ENCODE measurements at regions of chr1 and their contacts with region 1.

Region 1: GRCh38 chr1:167220537-167221125 is at the start of gene POU2F1:
- DNase-seq: peak; percentile 99
- H3K4me3 ChIP-seq: peak within 1 kb of the TSS; percentile 86 to 95 (median 88)
- H3K27ac ChIP-seq: peak within 1 kb of the TSS; percentile 62
- H3K4me1 ChIP-seq: peaks cover 8% of the 10 kb centered on the region
- H3K27me3 ChIP-seq: no peaks in the 10 kb centered on the region
- CTCF ChIP-seq: peak; percentile 59 to 88
- POLR2A ChIP-seq: peak; percentile 83
- total RNA-seq, gene POU2F1: 12.9 and 15.0 TPM in 2 replicates

Region 2: DNA sequence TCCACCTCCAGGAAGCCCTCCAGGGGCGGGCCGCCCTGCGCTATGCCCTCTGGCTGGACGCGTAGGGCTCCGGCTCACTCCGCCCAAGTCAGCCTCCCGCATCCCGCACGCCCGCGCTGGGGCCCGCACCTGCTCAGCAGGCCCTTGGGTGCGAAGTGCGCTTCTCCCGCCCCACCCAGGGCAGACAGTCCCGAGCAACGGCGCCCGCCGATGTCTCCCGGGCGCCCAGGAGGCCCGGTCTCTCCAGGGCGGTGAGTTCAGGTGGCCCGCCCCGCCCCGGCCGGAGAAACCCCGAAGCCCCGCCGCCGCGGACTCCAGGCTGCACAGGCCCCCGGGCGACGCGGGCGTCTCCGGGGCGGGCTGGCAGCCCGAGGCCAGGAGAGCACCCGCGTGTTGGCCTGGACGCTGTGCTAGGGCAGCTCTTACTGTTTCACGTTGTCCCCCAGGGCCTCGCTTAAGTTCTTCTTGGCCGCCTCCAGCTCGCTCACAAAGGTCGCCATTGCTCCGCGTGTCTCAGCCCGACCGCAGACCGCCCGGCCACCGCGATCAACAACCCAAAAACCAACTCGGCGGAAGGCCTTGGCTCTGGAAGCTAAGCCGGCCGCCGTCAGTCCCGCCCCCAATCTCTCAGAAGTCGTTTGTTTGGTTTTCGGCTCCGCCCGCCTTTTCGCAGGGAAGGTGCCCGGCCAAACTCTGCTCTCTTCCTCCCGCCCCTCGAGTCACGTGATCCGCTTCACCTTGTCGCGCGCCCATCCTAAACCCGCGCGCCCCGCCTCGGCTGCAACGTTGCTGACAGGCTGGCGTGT is 344.7 kb before region 1 on chr1 and contains the start of gene TADA1:
- CTCF ChIA-PET with region 1: interaction called, 4 read pairs
- POLR2A ChIA-PET with region 1: interaction called, 7 read pairs
- dilution Hi-C with region 1: no loop called
- intact Hi-C with region 1: loop called (anchors 1 kb)
- DNase-seq: peak; percentile 98
- H3K4me3 ChIP-seq: peak within 1 kb of the TSS; percentile 2 to 63 (median 53)
- H3K27ac ChIP-seq: peak within 1 kb of the TSS; percentile 47
- H3K4me1 ChIP-seq: peaks cover 10% of the 10 kb centered on the region
- H3K27me3 ChIP-seq: no peaks in the 10 kb centered on the region
- CTCF ChIP-seq: peak in 1 of 2 donors; percentile 22
- POLR2A ChIP-seq: peak; percentile 72
- total RNA-seq, gene TADA1: 7.0 and 7.5 TPM in 2 replicates

Region 3: GRCh38 chr1:167066333-167067122 is 154.1 kb before region 1 on chr1:
- CTCF ChIA-PET with region 1: interaction called, 13 read pairs
- POLR2A ChIA-PET with region 1: no interaction called
- dilution Hi-C with region 1: no loop called
- intact Hi-C with region 1: loop called (anchors 1 kb)
- DNase-seq: peak; percentile 43
- H3K4me3 ChIP-seq: no peak overlapping the region
- H3K27ac ChIP-seq: no peak overlapping the region
- H3K4me1 ChIP-seq: no peaks in the 10 kb centered on the region
- H3K27me3 ChIP-seq: peaks cover 0 to 9% of the 10 kb centered on the region in 2 experiments
- CTCF ChIP-seq: peak; percentile 94 to 98
- POLR2A ChIP-seq: no peak

Region 4: DNA sequence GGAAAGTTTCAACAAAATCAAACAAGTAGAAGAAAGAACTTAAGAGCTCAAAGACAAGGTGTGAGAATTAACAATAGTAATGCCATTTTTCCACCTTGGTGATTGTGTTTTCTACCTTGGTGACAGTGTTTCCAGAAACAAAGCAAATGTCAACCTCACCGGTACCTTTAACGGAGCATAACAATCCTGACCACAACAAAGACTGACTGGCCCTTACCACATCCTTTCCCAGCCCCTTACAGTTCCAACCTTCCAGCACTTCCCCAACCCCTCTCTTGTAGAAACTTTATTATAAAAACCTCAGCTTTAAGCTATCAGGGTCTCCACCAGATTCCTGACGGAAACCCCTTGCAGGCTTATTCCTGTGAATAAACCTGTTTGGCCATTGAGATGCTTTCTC is 110.0 kb before region 1 on chr1:
- CTCF ChIA-PET with region 1: no interaction called
- POLR2A ChIA-PET with region 1: no interaction called
- dilution Hi-C with region 1: no loop called
- intact Hi-C with region 1: no loop called
- DNase-seq: no peak
- H3K4me3 ChIP-seq: no peak overlapping the region
- H3K27ac ChIP-seq: no peak overlapping the region
- H3K4me1 ChIP-seq: no peaks in the 10 kb centered on the region
- H3K27me3 ChIP-seq: no peaks in the 10 kb centered on the region
- CTCF ChIP-seq: no peak
- POLR2A ChIP-seq: no peak

Region 5: GRCh38 chr1:167373398-167373797 is 152.8 kb after region 1 on chr1:
- CTCF ChIA-PET with region 1: no interaction called
- POLR2A ChIA-PET with region 1: no interaction called
- dilution Hi-C with region 1: no loop called
- intact Hi-C with region 1: no loop called
- DNase-seq: no peak
- H3K4me3 ChIP-seq: no peak overlapping the region
- H3K27ac ChIP-seq: no peak overlapping the region
- H3K4me1 ChIP-seq: no peaks in the 10 kb centered on the region
- H3K27me3 ChIP-seq: no peaks in the 10 kb centered on the region
- CTCF ChIP-seq: no peak
- POLR2A ChIP-seq: no peak

Region 6: GRCh38 chr1:167419245-167419644 is 198.6 kb after region 1 on chr1:
- CTCF ChIA-PET with region 1: no interaction called
- POLR2A ChIA-PET with region 1: no interaction called
- dilution Hi-C with region 1: no loop called
- intact Hi-C with region 1: no loop called
- DNase-seq: no peak
- H3K4me3 ChIP-seq: no peak overlapping the region
- H3K27ac ChIP-seq: no peak overlapping the region
- H3K4me1 ChIP-seq: no peaks in the 10 kb centered on the region
- H3K27me3 ChIP-seq: no peaks in the 10 kb centered on the region
- CTCF ChIP-seq: no peak
- POLR2A ChIP-seq: no peak

Region 7: DNA sequence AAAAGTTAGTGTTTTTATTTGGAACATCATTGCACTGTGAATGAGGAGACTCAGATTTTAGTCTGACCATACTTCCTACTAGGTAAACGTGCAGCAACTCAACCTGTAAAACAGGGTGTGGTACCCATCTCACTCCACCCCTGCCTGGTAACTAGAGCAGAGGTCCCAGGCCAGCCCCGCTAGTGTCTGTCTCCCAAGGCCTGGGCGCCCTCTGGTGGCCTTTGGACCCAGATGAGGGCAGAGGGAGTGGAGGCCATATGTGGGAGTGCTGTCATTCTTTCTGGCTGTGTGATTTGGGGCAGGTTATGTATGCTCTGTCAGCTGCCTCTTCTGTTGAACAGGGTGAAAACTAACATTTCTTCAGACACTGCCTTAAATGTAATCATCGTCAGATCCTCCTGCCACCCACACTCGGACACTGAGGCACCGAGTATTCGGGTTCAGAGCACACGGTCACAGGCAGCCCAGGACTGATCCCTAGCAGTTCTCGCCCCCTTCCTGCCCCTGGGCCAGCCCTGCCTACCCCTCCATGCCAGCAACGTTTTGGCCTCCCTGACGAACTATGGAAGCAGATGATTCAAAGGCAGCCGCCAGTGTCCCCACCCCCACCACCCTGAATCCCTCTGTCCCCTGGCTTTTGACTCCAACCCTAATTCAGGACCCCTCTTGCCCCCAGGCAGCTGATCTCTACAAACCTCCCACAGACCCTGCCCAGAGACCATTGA is 221.7 kb after region 1 on chr1:
- CTCF ChIA-PET with region 1: interaction called, 4 read pairs
- POLR2A ChIA-PET with region 1: no interaction called
- dilution Hi-C with region 1: no loop called
- intact Hi-C with region 1: loop called (anchors 1 kb)
- DNase-seq: peak; percentile 49
- H3K4me3 ChIP-seq: no peak overlapping the region
- H3K27ac ChIP-seq: no peak overlapping the region
- H3K4me1 ChIP-seq: no peaks in the 10 kb centered on the region
- H3K27me3 ChIP-seq: peaks cover 0 to 4% of the 10 kb centered on the region in 2 experiments
- CTCF ChIP-seq: peak; percentile 81 to 88
- POLR2A ChIP-seq: no peak

Region 8: GRCh38 chr1:167517535-167518330 is 297.1 kb after region 1 on chr1:
- CTCF ChIA-PET with region 1: no interaction called
- POLR2A ChIA-PET with region 1: no interaction called
- dilution Hi-C with region 1: no loop called
- intact Hi-C with region 1: no loop called
- DNase-seq: no peak
- H3K4me3 ChIP-seq: no peak overlapping the region
- H3K27ac ChIP-seq: no peak overlapping the region
- H3K4me1 ChIP-seq: no peaks in the 10 kb centered on the region
- H3K27me3 ChIP-seq: peaks cover 0 to 1% of the 10 kb centered on the region in 2 experiments
- CTCF ChIP-seq: no peak
- POLR2A ChIP-seq: no peak

Region 9: GRCh38 chr1:167553136-167554027 is 332.8 kb after region 1 on chr1 and contains the start of gene CREG1:
- CTCF ChIA-PET with region 1: interaction called, 4 read pairs
- POLR2A ChIA-PET with region 1: interaction called, 7 read pairs
- dilution Hi-C with region 1: no loop called
- intact Hi-C with region 1: loop called (anchors 5 kb)
- DNase-seq: peak; percentile 91
- H3K4me3 ChIP-seq: peak within 1 kb of the TSS; percentile 42 to 60 (median 49)
- H3K27ac ChIP-seq: no peak within 1 kb of the TSS
- H3K4me1 ChIP-seq: peaks cover 5% of the 10 kb centered on the region
- H3K27me3 ChIP-seq: peaks cover 0 to 2% of the 10 kb centered on the region in 2 experiments
- CTCF ChIP-seq: no peak
- POLR2A ChIP-seq: peak; percentile 49
- total RNA-seq, gene CREG1: 12.1 and 15.8 TPM in 2 replicates

Region 10: DNA sequence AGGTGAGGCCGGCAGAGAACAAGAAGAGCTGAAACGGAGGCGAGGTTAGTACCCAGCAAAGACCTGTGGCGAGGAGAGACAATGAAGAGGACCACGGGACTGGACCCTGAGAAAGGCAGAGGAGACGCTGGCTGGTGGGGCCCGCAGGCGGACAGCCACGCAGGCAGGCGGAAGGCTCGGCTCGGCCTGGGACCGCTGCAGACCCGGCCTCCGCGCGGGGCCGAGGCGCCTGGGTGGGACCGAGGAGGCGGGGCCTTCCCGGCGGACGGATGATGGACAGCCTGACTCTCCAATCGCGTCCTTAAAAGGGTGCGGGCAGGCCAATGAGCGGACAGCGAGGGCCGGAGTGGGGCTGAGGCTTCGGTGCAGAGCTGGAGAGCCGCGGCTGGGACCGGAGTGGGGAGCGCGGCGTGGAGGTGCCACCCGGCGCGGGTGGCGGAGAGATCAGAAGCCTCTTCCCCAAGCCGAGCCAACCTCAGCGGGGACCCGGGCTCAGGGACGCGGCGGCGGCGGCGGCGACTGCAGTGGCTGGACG is 501.1 kb after region 1 on chr1 and contains the start of gene MPZL1:
- CTCF ChIA-PET with region 1: interaction called, 4 read pairs
- POLR2A ChIA-PET with region 1: no interaction called
- dilution Hi-C with region 1: no loop called
- intact Hi-C with region 1: loop called (anchors 2 kb)
- DNase-seq: peak; percentile 96
- H3K4me3 ChIP-seq: peak within 1 kb of the TSS; percentile 59 to 97 (median 72)
- H3K27ac ChIP-seq: peak within 1 kb of the TSS; percentile 72
- H3K4me1 ChIP-seq: peaks cover 26% of the 10 kb centered on the region
- H3K27me3 ChIP-seq: no peaks in the 10 kb centered on the region
- CTCF ChIP-seq: no peak
- POLR2A ChIP-seq: peak; percentile 61
- total RNA-seq, gene MPZL1: 99.1 and 99.4 TPM in 2 replicates